ENCODE measurements at regions of chr11 and their contacts with region 1.

Region 1: DNA sequence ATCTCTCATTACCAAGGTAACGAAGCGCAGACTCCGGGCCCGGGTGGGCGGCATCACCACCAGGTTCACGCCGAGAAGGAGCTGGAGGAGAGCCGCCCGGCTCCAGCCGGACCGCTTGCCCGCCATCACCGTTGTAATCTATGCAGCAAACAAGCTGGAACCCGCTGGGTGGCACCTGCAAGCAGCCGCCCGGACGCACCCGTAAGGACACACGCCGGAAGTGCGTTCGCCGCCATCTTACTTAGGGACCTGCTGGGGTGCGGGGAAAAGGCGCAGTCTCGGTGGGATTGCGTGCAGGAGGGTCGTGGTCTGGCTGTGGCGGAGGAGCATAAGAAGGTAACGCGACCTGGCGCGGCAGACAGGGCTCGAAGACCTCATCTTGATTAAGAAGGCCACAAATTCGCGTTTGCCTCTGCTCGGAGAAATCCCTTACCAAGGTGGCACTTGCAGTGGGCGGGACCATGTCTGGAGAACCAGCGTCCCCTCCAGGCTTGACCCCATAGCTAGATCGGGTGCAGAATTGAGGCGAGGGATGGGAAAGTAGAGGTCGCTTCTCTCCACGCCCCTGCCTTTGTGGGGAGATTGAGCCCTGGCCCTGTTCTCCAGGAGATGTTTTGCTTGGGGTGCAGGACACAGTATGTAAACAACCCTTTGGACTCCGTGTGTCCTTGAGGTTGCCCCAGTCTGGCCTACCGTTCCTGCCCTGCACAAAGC is at the start of gene ACP2:
- DNase-seq: peak; percentile 89
- H3K4me3 ChIP-seq: peak within 1 kb of the TSS; percentile 75 to 92
- H3K27ac ChIP-seq: peak within 1 kb of the TSS; percentile 63 to 96
- H3K4me1 ChIP-seq: peaks cover 8 to 15% of the 10 kb centered on the region in 2 experiments
- H3K27me3 ChIP-seq: no peaks in the 10 kb centered on the region
- CTCF ChIP-seq: peak; percentile 49
- EP300 ChIP-seq: no peak
- RAD21 ChIP-seq: peak; percentile 10; the same call in 1 of the 2 replicates
- polyA plus RNA-seq, gene ACP2: 15.9 and 17.5 TPM in 2 replicates

Region 2: DNA sequence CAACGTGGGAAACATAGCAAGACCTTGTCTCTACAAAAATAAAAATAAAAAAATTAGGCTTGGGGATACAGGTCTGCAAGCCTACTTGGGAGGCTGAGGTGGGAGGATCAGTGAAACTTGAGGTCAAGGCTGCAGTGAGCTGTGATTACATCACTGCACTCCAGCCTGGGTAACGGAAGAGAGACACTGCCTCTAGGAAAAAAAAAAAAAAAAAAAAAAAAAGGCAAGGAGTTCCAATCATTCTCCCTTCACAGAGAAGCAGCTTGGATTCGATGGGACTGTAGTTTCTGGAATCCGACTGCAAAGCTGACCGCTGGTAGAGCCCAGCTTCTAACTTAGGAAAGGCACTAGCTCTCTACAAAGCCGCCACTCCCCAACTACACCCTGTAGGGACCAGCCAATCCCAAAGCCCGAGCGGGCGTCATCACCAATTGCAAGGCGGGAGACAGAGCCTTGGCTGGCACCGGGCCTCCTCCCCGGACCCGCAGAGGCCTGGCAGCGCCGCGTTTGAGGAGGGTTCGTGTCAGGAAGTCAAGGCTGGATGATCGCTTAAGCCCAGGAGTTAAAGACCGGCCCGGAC is 34.7 kb before region 1 on chr11:
- CTCF ChIA-PET with region 1: interaction called, 19 read pairs
- POLR2A ChIA-PET with region 1: interaction called, 28 read pairs
- DNase-seq: peak; percentile 88
- H3K4me3 ChIP-seq: peak overlapping the region; percentile 61 to 79
- H3K27ac ChIP-seq: peak overlapping the region; percentile 87 to 90
- H3K4me1 ChIP-seq: peaks cover 16 to 20% of the 10 kb centered on the region in 2 experiments; a peak in 2 of 4 replicates
- H3K27me3 ChIP-seq: no peaks in the 10 kb centered on the region
- CTCF ChIP-seq: no peak
- EP300 ChIP-seq: no peak
- RAD21 ChIP-seq: no peak

Region 3: GRCh38 chr11:47233989-47234668 is 14.7 kb before region 1 on chr11:
- CTCF ChIA-PET with region 1: interaction called, 31 read pairs
- POLR2A ChIA-PET with region 1: interaction called, 10 read pairs
- DNase-seq: peak; percentile 31
- H3K4me3 ChIP-seq: no peak overlapping the region
- H3K27ac ChIP-seq: peak overlapping the region in 1 of 2 experiments; percentile 20; a peak in 1 of 4 replicates
- H3K4me1 ChIP-seq: peaks cover 2 to 14% of the 10 kb centered on the region in 2 experiments; a peak in 2 of 4 replicates
- H3K27me3 ChIP-seq: no peaks in the 10 kb centered on the region
- CTCF ChIP-seq: peak; percentile 38
- EP300 ChIP-seq: no peak
- RAD21 ChIP-seq: peak; percentile 51

Region 4: DNA sequence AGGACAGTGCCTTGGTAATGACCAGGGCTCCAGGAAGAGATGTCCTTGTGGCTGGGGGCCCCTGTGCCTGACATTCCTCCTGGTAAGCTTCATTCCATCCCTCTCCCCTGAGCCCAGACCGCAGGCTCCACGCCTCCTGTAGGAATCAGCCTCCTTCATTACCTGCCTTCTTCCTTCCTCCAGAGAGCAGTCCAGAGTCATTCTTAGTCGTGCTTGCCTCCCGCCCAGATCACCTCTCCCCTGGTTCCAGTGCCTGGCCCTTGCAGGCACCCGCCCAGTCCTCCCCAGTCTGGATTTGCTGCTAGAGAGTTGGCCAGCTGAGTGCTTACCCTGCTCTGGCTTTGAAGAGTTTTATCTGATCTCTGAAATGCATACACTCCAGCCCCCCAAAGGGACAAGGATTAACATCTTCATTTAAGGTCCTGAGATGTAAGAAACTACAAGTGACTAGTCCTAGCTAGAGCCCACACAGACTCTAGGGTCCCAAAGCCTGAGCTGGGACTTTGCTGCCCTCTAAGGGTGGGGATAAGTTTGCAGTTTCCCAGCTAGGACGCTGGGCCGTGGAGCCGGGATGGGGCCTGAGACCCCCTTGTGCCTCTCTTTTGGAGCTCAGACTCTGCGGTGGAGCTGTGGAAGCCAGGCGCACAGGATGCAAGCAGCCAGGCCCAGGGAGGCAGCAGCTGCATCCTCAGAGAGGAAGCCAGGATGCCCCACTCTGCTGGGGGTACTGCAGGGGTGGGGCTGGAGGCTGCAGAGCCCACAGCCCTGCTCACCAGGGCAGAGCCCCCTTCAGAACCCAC is 10.6 kb after region 1 on chr11:
- CTCF ChIA-PET with region 1: interaction called, 35 read pairs
- POLR2A ChIA-PET with region 1: interaction called, 3 read pairs
- DNase-seq: peak; percentile 74
- H3K4me3 ChIP-seq: no peak overlapping the region
- H3K27ac ChIP-seq: no peak overlapping the region
- H3K4me1 ChIP-seq: peaks cover 17 to 20% of the 10 kb centered on the region in 2 experiments; a peak in 3 of 4 replicates
- H3K27me3 ChIP-seq: no peaks in the 10 kb centered on the region
- CTCF ChIP-seq: peak; percentile 58
- EP300 ChIP-seq: no peak
- RAD21 ChIP-seq: peak; percentile 73